AG04450 (cell line): ENCODE measurements at regions of chr14 and their contacts with region 1.

Region 1: DNA sequence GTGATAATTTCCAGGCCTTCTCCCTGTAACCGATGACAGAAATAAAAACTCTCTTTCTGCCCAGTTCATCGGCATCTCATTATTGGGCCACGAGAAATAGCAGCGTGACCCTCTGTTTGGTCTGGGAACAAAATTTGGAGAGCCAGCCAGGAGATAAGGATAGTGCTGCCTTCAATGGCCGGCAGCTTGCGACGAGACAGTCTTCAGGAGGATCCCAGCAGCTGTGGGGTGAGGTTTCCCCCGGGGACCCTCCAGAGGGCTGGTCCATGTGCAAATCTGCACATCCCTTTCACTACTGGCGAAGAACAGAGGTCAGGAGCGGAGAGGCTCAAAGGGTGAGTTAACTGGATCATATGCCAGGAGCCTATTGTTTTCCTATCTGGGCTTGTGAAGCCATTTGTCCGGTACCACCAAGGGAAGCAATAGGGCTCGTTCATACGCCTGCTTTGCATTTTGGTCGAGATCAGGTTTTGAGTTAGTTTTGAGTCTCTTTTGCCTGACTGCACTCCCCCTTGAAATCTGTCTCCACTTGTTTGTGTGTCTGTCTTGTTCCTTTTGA is 4.8 kb downstream of the SLC39A2 start:
- DNase-seq: no peak
- H3K4me3 ChIP-seq: no peak overlapping the region
- H3K27ac ChIP-seq: no peak overlapping the region
- H3K27me3 ChIP-seq: no peaks in the 10 kb centered on the region
- CTCF ChIP-seq: no peak

Region 2: DNA sequence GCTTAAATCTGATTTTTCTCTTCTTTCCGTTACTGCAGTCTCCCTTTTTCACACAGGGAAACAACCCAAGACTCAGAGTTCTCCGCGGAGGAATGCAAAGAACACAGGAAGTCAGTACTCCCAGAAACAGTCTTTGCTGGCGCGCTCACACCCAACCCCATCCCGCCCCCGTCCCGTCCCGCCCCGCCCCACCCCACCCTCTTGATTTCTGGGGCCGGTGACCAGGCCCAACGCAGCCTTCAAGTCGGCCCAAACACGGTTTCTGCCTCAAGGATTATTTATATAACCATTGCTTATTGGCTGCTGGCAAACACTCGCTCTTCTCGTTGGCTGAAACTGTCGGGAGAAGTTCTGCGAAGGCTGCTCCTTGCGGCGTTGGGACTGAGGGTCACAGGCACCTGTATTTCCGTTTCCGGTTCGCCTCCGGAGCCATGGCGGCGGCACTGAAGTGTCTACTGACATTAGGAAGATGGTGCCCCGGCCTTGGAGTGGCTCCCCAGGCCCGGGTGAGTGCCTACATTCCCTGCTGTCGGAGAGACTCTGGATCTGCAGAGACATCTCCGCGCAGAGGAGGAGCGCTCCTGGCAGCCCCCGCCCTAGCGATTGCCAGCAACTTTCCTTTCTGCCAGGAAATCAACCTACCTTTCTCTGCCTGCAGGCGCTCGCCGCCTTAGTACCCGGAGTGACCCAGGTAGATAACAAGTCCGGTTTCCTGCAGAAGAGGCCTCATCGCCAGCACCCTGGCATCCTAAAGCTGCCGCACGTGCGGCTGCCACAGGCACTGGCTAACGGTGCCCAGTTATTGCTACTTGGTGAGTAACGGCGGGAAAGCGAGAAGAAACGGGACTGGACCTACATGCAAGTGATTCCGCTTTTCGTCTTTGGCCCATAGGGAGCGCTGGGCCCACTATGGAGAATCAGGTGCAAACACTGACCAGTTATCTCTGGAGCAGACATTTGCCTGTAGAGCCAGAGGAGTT is 14.0 kb before region 1 on chr14 and contains the start of gene METTL17:
- CTCF ChIA-PET with region 1: interaction called, 19 read pairs
- POLR2A ChIA-PET with region 1: no interaction called
- DNase-seq: peak; percentile 96
- H3K4me3 ChIP-seq: peak within 1 kb of the TSS; percentile 88
- H3K27ac ChIP-seq: peak within 1 kb of the TSS; percentile 52
- H3K27me3 ChIP-seq: no peaks in the 10 kb centered on the region
- CTCF ChIP-seq: peak; percentile 48
- polyA plus RNA-seq, gene METTL17: 55.3 and 62.7 TPM in 2 replicates

Region 3: DNA sequence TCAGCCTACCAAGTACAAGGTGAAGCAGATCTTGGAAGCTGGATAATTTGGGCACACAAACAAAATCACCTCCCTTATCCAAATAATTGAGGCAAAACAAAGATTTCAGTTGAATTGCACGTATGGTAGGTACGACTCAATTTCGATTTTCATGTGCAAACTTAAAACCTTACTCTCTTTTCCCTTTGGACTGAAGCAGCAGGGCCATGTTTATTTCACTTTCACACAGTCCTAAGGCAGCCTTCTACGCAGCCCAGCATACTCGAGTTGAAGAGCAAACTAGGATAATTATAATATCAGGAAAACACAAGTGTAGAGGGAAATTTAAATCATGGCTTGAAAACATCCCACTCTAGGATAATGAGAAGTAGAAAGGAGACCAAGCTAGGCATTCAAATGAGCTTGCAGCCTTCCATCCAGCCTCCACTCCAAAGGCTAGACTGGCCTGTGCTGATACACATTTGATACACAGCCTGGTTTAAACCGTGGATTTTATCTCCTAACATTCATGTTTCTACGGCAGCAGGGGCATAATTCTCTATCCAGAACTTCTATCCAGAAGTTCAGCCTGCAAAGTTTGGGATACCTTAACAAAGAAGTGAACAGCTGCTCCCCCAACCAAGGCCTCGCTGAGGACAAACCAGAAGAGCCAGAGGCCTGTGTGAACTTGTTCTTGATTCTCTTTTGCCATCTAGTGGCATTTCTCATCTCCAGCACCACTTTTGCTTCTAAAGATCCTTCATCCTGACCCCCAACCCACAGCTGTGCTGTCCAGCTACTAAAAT is 35.9 kb after region 1 on chr14:
- CTCF ChIA-PET with region 1: interaction called, 21 read pairs
- POLR2A ChIA-PET with region 1: no interaction called
- DNase-seq: peak; percentile 26
- H3K4me3 ChIP-seq: no peak overlapping the region
- H3K27ac ChIP-seq: no peak overlapping the region
- H3K27me3 ChIP-seq: peaks cover 28% of the 10 kb centered on the region
- CTCF ChIP-seq: peak; percentile 71